ENCODE measurements at regions of chr5 and their contacts with region 1.

Region 1: DNA sequence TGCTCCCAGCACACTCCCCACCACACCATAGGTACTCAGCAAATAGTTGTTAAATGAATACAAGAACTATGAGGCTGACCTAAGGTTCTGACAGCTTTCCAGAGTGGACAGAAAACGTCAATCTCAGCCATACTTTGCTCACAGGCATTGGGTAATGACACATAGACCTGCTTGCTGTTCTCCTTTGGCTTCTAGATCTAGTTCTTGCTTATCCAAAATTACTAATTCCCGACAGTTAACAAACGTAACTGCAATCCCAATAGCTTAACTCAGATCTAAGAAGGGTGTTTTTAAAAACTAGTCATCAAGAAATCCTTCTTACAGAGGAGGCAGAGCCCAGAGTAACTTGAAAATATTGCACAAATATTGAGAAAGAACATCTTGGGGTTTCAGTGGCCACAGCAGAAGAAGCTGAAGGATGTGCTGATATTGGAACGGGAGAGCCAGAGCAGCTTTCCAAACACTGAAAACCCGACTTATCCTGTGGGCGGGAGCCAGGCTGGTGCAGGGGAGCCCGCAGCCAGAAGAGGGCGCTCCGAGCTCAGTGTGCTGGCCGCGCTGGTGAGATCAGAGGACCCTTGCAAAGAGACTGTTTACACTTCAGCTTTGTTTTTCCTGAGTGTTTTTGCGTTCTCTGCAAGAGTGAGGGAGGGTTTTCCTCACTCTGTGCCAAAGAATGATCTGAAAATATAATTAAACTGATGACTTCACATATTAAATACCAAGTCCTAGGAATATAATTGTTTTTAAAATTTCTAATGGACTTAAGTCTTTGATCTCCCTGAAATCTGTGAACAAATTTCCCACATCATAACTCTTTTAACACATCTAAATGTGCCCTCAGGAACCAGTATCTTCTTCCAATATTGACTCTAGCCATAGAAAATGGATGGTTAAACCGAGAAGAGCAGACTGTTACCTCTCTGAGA is 30.3 kb downstream of the FGF1 start:
- DNase-seq: peak; percentile 88
- ATAC-seq: peak; percentile 90
- H3K4me3 Mint-ChIP-seq: no peak overlapping the region
- H3K27ac Mint-ChIP-seq: no peak overlapping the region
- H3K4me1 Mint-ChIP-seq: peaks cover 14% of the 10 kb centered on the region
- H3K27me3 Mint-ChIP-seq: no peaks in the 10 kb centered on the region
- CTCF ChIP-seq: peak; percentile 93

Region 2: GRCh38 chr5:141986072-141986471 is 669.5 kb before region 1 on chr5:
- CTCF ChIA-PET with region 1: no interaction called
- POLR2A ChIA-PET with region 1: no interaction called
- DNase-seq: no peak
- ATAC-seq: no peak
- H3K4me3 Mint-ChIP-seq: no peak overlapping the region
- H3K27ac Mint-ChIP-seq: 0 out of 2 replicates have a peak overlapping the region, but pooled peaks have one; percentile 1
- H3K4me1 Mint-ChIP-seq: no peaks in the 10 kb centered on the region
- H3K27me3 Mint-ChIP-seq: no peaks in the 10 kb centered on the region
- CTCF ChIP-seq: no peak

Region 3: GRCh38 chr5:142151436-142152383 is 503.9 kb before region 1 on chr5:
- CTCF ChIA-PET with region 1: interaction called, 14 read pairs
- POLR2A ChIA-PET with region 1: no interaction called
- DNase-seq: peak; percentile 41
- ATAC-seq: peak; percentile 69
- H3K4me3 Mint-ChIP-seq: no peak overlapping the region
- H3K27ac Mint-ChIP-seq: 0 out of 2 replicates have a peak overlapping the region, but pooled peaks have one; percentile 53
- H3K4me1 Mint-ChIP-seq: peaks cover 51% of the 10 kb centered on the region
- H3K27me3 Mint-ChIP-seq: no peaks in the 10 kb centered on the region
- CTCF ChIP-seq: peak; percentile 85

Region 4: DNA sequence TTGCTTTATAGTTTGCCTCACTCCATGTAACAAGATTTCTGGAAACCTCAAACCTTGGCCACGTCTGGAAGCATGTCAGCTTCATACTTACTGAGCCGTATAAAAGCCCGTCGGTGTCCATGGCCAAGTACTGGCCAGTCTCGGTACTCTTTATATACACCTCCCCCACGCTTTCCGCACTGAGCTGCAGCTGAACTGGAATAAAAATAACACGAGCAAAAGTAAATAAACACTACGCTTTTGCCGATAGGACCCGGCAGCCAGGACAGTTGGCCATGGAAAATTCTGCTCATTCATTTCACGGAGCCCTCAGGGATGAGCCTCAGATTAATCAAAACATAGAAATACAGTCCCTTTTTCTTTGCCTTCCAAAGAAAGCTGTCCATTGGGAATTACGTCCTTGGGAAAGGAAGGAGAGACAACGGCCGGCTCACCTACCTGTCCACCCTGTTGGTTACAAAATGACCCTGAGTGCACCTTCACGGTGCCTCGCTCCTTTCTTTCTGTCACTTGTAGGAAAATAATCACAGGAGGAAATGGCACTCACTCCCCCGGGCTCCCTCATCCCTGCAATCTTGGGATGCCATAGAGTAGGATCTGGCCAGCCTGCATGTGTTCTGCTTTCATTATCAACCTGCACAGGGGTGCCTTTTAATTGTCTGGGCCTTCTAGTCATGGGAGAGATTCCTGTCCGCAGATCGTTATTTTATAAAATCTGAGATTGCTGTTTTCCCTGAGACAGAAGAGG is 54.8 kb before region 1 on chr5:
- CTCF ChIA-PET with region 1: interaction called, 28 read pairs
- POLR2A ChIA-PET with region 1: no interaction called
- DNase-seq: no peak
- ATAC-seq: no peak
- H3K4me3 Mint-ChIP-seq: no peak overlapping the region
- H3K27ac Mint-ChIP-seq: no peak overlapping the region
- H3K4me1 Mint-ChIP-seq: peaks cover 30% of the 10 kb centered on the region
- H3K27me3 Mint-ChIP-seq: no peaks in the 10 kb centered on the region
- CTCF ChIP-seq: no peak

Region 5: DNA sequence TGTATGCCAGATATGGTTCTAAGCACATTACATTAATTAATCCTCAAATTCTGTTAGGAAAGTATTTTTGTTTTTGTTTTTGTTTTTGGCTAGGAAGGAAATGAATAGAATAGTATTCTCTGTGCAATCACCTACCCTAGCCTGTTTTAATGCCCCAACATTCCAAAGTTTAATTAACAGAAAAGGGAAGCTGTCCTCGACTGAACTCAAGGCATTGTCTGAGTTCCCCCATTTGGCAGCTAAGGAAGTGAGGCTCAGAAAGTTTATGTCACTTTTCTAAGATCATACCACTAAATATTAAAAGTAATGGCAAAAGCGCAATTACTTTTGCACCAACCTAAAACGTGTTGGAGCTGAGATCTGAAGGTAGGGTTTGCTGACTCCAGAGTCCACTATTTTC is 29.5 kb before region 1 on chr5:
- CTCF ChIA-PET with region 1: interaction called, 11 read pairs
- POLR2A ChIA-PET with region 1: interaction called, 6 read pairs
- DNase-seq: no peak
- ATAC-seq: no peak
- H3K4me3 Mint-ChIP-seq: no peak overlapping the region
- H3K27ac Mint-ChIP-seq: no peak overlapping the region
- H3K4me1 Mint-ChIP-seq: peaks cover 29% of the 10 kb centered on the region
- H3K27me3 Mint-ChIP-seq: no peaks in the 10 kb centered on the region; the same call in 1 of the 2 replicates
- CTCF ChIP-seq: no peak

Region 6: GRCh38 chr5:142669477-142669876 is 13.9 kb after region 1 on chr5:
- CTCF ChIA-PET with region 1: interaction called, 28 read pairs
- POLR2A ChIA-PET with region 1: no interaction called
- DNase-seq: no peak
- ATAC-seq: no peak
- H3K4me3 Mint-ChIP-seq: no peak overlapping the region
- H3K27ac Mint-ChIP-seq: no peak overlapping the region
- H3K4me1 Mint-ChIP-seq: peaks cover 25% of the 10 kb centered on the region
- H3K27me3 Mint-ChIP-seq: no peaks in the 10 kb centered on the region
- CTCF ChIP-seq: no peak

Region 7: DNA sequence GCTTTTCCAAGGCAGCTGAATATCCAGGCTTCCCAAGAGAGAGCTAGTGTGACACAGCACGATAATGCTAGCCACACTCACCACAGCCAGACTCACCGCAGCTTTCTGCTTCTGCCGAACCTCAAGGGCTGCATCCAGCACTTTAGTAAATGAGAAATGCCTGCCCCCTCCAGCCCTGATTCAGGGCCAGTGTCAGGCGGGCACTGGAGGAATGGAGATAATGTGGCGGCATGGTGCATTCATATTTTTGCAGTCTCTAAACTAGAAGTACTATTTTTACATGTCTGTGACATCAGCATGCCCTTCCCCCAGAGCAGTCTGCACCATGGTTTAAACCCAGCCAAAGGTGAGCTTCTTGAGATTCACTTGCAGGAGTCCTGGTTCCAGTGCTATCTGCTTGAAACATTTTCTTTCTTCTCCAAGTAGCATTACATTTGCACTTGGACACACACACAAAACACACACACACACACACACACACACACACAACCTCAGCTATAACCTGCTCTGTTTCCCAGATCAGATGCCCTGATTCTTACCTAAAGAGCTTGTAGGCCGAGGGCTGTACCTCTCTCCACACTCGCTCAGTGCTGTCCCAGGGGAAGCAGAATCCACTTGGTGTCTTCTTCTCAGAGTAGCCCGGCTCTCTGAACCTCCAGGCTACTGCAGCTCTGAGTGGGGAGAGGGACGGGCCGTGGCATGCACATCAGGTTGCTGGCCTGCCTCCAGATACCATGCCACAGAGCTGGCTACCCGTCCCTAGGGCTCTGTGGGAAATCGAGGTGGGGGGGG is 30.0 kb after region 1 on chr5 and contains the start of gene FGF1:
- CTCF ChIA-PET with region 1: interaction called, 70 read pairs
- POLR2A ChIA-PET with region 1: interaction called, 3 read pairs
- DNase-seq: no peak
- ATAC-seq: no peak; the same call in 1 of the 2 replicates
- H3K4me3 Mint-ChIP-seq: no peak within 1 kb of the TSS
- H3K27ac Mint-ChIP-seq: peak within 1 kb of the TSS; percentile 93
- H3K4me1 Mint-ChIP-seq: peaks cover 50% of the 10 kb centered on the region
- H3K27me3 Mint-ChIP-seq: no peaks in the 10 kb centered on the region
- CTCF ChIP-seq: no peak
- total RNA-seq, gene FGF1: 0.21 to 0.55 TPM in 2 of 3 replicates, not detected in the other

Region 8: DNA sequence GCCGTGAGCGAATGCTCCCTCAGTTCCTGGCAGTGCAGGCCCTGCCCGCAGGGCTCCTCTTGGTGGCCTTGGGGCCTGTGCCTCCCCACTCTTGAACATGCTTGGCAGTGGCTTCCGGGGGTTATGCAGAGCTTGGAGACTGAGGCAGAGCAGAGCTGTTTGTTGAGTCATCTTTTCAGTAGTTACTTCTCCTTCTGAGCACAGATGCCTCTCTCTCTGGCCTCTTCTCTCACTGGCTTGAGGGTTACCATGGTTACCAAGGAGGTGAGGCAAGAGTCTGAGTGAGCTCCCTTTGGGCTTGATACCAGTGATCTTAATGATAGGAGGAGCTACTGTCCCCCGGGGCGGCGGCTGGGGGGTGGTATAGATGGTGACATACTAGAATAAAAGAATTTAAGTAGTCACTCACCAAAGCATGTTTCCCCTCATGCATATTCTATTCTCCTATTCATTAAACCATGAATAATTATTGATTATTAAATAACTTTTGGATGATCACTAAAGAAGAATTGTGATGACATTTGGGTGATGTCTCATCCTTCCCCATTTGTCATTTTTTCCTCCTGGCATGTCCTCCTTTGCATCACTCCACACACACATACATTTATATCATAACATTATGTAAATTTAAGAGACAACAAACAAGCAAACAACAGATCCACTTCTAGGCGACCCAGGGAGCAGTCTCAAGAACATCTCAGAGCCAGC is 225.6 kb after region 1 on chr5:
- CTCF ChIA-PET with region 1: interaction called, 10 read pairs
- POLR2A ChIA-PET with region 1: no interaction called
- DNase-seq: no peak
- ATAC-seq: peak; percentile 73
- H3K4me3 Mint-ChIP-seq: no peak overlapping the region
- H3K27ac Mint-ChIP-seq: no peak overlapping the region; the same call in 1 of the 2 replicates
- H3K4me1 Mint-ChIP-seq: peaks cover 44% of the 10 kb centered on the region
- H3K27me3 Mint-ChIP-seq: no peaks in the 10 kb centered on the region
- CTCF ChIP-seq: no peak

Region 9: DNA sequence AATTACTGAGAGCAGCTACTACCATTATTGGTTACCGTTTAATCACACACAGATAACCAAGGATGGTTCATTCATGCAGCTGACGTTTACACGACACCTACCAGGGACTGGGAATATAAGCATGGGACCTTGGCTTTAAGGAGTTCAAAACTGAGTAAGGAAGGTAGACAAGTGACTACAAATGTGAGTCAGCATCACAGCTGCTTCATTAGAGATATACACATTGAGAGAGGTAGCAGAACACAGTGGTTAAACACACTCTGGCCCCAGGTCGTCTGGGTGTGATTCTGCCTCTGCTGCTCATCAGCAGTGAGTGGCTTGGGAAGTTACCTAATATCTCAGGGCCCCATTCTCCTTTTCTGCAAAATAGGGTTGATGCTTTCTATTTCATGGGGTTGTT is 479.3 kb after region 1 on chr5:
- CTCF ChIA-PET with region 1: no interaction called
- POLR2A ChIA-PET with region 1: no interaction called
- DNase-seq: no peak
- ATAC-seq: no peak
- H3K4me3 Mint-ChIP-seq: no peak overlapping the region
- H3K27ac Mint-ChIP-seq: no peak overlapping the region
- H3K4me1 Mint-ChIP-seq: no peaks in the 10 kb centered on the region; the same call in 1 of the 2 replicates
- H3K27me3 Mint-ChIP-seq: no peaks in the 10 kb centered on the region
- CTCF ChIP-seq: no peak